Activated naive CD4-positive, alpha-beta T cell treated with anti-CD3 and anti-CD28 coated beads for 36 hours (primary cell): ENCODE measurements at regions of chr3 and their contacts with region 1.

Region 1: DNA sequence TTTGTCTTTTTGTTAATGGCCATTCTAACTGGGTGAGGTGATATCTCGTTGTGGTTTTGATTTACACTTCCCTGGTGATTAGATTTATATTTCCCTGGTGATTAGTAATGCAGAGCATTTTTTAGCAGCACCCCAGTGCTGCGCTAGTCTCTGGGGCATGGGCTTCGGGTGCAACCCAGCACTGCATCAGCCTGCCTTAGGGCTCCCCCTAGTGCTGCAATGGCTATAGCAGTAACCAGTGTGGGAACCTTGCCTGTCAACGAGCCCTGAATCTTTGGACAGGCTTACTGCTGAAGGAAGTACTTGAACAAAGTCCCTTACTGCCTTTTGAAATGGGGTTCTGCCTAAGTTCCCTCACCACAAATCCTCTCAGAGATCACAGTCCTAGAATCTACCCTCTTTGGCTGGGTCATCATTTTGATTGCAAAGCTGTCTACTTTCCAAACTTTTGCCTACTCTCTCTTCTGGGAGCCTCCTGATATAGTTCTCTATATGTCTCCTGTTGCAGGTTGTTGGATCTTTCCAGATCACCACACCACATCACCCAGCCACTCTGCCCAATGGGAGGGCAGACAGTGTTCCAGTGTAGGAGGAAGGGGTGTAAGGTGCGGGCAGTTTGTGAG is 79.2 kb upstream of the CCNL1 start:
- DNase-seq: peak; percentile 88
- H3K4me3 Mint-ChIP-seq: no peak overlapping the region
- H3K27ac Mint-ChIP-seq: no peak overlapping the region
- H3K4me1 Mint-ChIP-seq: peaks cover 2% of the 10 kb centered on the region
- H3K27me3 Mint-ChIP-seq: no peaks in the 10 kb centered on the region

Region 2: GRCh38 chr3:157190388-157190872 is 48.8 kb before region 1 on chr3:
- CTCF ChIA-PET with region 1: no interaction called
- intact Hi-C with region 1: no loop called
- DNase-seq: no peak
- H3K4me3 Mint-ChIP-seq: no peak overlapping the region
- H3K27ac Mint-ChIP-seq: no peak overlapping the region
- H3K4me1 Mint-ChIP-seq: no peaks in the 10 kb centered on the region
- H3K27me3 Mint-ChIP-seq: no peaks in the 10 kb centered on the region

Region 3: DNA sequence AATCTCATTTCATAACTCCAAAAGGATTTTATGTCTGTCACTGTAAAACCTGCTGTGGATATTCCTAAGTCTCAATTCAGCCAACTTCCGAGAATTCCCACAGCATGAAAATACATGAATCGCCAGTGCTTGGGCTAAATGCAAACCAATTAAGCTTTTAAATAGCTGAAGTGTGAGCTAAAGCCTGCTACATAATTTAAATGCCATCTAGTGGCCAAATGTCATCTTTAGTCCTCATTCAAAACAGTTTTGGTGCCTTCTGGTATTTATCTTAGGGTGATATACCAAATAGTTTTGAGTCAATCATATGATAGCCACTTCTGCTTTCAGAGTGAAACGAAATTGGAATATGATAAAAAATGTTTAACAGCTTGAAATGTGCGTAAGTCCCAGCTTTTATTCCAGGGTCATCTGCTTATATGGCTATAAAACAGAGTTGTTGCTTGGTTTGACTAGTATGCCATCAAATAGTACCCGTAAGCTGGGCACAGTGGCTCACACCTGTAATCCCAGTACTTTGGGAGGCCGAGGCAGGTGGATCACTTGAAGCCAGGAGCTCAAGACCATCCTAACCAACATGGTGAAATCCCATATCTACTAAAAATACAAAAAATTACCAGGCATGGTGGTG is 37.4 kb before region 1 on chr3:
- CTCF ChIA-PET with region 1: interaction called, 7 read pairs
- intact Hi-C with region 1: loop called (anchors 1 kb)
- DNase-seq: no peak
- H3K4me3 Mint-ChIP-seq: no peak overlapping the region
- H3K27ac Mint-ChIP-seq: no peak overlapping the region
- H3K4me1 Mint-ChIP-seq: no peaks in the 10 kb centered on the region
- H3K27me3 Mint-ChIP-seq: no peaks in the 10 kb centered on the region

Region 4: GRCh38 chr3:157493627-157494550 is 254.7 kb after region 1 on chr3:
- CTCF ChIA-PET with region 1: no interaction called
- intact Hi-C with region 1: loop called (anchors 10 kb)
- DNase-seq: no peak
- H3K4me3 Mint-ChIP-seq: no peak overlapping the region
- H3K27ac Mint-ChIP-seq: no peak overlapping the region
- H3K4me1 Mint-ChIP-seq: no peaks in the 10 kb centered on the region
- H3K27me3 Mint-ChIP-seq: peaks cover 27% of the 10 kb centered on the region